Posterior vena cava (tissue), 2 donors: ENCODE measurements at regions of chr2 and their contacts with region 1.

Region 1: GRCh38 chr2:118122594-118123281 is 34.5 kb downstream of the INSIG2 start:
- DNase-seq: no peak

Region 2: DNA sequence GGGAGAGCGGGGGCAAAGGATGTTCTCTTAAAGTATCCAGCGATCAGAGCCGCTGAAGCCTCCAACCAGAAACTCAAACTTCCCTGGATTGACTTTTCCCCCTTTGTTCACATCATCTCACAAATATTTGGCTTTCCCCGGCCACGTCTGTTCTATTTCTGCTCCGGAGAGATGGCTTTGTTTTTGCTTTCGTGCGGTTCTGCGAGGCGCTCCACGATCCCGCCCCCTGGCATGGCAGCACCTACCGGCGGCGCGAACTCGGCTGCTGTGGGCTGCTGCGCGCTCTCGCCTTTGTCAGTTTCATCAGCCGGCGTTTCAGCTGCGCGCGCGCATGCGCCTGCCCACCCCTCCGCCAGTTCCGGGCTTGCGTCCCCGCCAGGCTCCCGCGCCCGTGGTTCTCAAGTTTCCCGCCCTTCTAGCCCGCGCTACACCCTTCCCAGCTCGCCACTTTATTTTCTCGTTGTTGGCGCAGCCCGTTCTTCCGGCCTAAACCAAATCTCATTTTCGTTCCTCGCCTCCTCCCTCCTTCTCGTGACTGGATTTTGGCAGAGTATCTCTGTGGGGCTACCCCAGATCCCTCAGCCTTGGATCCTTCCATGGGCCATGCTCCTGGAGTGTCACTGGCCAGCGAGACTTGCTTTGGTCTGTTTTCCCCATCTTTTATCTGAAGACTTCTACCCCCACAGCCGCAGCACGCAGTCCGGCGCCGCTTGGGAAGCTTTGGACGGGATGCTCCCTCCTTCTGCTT is 63.5 kb after region 1 on chr2:
- intact Hi-C with region 1: loop called in 1 of 2 experiments (anchors 10 kb)
- DNase-seq: peak; percentile 96

Region 3: GRCh38 chr2:118237451-118237850 is 114.7 kb after region 1 on chr2:
- intact Hi-C with region 1: no loop called
- DNase-seq: no peak